B cell (primary cell): ENCODE measurements at regions of chr16 and their contacts with region 1.

Region 1: GRCh38 chr16:23877107-23878090 is 41.6 kb downstream of the PRKCB start:
- DNase-seq: peak; percentile 39
- ATAC-seq: peak; percentile 52
- H3K4me3 ChIP-seq: no peak overlapping the region
- H3K4me3 Mint-ChIP-seq: peak overlapping the region; percentile 2
- H3K27ac ChIP-seq: peak overlapping the region; percentile 34 to 77
- H3K27ac Mint-ChIP-seq: peak overlapping the region; percentile 93
- H3K4me1 ChIP-seq: peaks cover 82 to 94% of the 10 kb centered on the region in 2 donors
- H3K4me1 Mint-ChIP-seq: peaks cover 89% of the 10 kb centered on the region
- H3K27me3 ChIP-seq: no peaks in the 10 kb centered on the region
- H3K27me3 Mint-ChIP-seq: no peaks in the 10 kb centered on the region
- CTCF ChIP-seq: peak; percentile 34

Region 2: DNA sequence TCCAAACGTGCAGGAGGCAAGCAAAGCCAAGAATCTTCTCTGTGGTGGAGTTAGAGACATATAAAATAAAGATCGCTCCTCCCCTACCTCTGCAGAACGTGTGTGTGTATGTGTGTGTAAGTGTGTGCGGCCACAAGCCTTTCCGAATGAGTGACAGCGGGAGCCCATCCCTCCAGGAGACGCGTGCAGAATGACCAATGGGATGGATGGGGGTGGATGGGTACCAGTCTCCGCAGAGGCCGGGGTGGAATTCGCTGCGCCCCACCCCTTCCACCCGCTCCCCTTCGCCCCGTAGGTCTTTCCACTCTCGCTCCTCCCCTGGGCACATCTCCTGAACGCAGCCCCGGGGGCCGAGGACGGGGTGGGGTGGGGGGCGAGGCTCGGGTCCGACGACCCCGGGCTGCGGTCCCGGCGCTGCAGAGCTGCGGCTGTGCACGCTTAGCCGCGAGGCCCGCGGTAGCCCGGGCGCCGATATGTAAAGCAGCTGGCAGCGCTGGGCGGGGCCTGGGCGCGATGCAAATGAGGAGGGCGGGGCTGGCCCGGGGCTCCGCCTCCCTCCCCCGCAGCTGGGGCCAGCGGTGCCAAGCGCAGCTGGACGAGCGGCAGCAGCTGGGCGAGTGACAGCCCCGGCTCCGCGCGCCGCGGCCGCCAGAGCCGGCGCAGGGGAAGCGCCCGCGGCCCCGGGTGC is 41.9 kb before region 1 on chr16 and contains the start of gene PRKCB:
- CTCF ChIA-PET with region 1: interaction called, 8 read pairs
- POLR2A ChIA-PET with region 1: no interaction called
- intact Hi-C with region 1: loop called (anchors 5 kb)
- DNase-seq: peak; percentile 93
- ATAC-seq: peak; percentile 83
- H3K4me3 ChIP-seq: peak within 1 kb of the TSS; percentile 78 to 98 (median 88)
- H3K4me3 Mint-ChIP-seq: peak within 1 kb of the TSS; percentile 99
- H3K27ac ChIP-seq: peak within 1 kb of the TSS; percentile 7 to 56
- H3K27ac Mint-ChIP-seq: peak within 1 kb of the TSS; percentile 96
- H3K4me1 ChIP-seq: peaks cover 34 to 37% of the 10 kb centered on the region in 2 donors
- H3K4me1 Mint-ChIP-seq: peaks cover 48% of the 10 kb centered on the region
- H3K27me3 ChIP-seq: no peaks in the 10 kb centered on the region
- H3K27me3 Mint-ChIP-seq: no peaks in the 10 kb centered on the region
- CTCF ChIP-seq: no peak
- total RNA-seq, gene PRKCB: 373 and 397 TPM in 2 replicates

Region 3: DNA sequence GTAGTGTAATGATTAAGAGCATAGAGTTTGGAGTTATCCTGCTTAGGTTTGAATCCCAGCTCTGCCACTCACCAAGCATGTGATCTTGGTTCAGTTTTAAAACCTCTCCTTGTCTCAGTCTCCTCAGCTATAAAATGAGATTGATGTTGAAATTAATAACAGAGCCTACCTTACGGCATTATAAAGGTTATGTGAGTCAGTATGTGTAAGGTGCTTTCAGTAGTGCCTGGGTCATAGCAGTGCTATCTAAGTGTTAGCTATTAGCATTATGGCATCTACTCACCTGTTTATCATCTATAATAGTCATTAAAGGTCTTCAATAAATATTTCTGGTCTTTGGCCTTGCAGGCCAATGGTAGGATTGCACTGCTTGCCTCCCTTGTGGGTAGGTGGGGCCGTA is 11.8 kb after region 1 on chr16:
- CTCF ChIA-PET with region 1: interaction called, 15 read pairs
- POLR2A ChIA-PET with region 1: no interaction called
- intact Hi-C with region 1: no loop called
- DNase-seq: no peak
- ATAC-seq: no peak
- H3K4me3 ChIP-seq: no peak overlapping the region
- H3K4me3 Mint-ChIP-seq: no peak overlapping the region
- H3K27ac ChIP-seq: no peak overlapping the region
- H3K27ac Mint-ChIP-seq: peak overlapping the region; percentile 11
- H3K4me1 ChIP-seq: peaks cover 54 to 63% of the 10 kb centered on the region in 2 donors
- H3K4me1 Mint-ChIP-seq: peaks cover 85% of the 10 kb centered on the region
- H3K27me3 ChIP-seq: no peaks in the 10 kb centered on the region
- H3K27me3 Mint-ChIP-seq: no peaks in the 10 kb centered on the region
- CTCF ChIP-seq: no peak

Region 4: GRCh38 chr16:23952128-23952970 is 75.0 kb after region 1 on chr16:
- CTCF ChIA-PET with region 1: interaction called, 11 read pairs
- POLR2A ChIA-PET with region 1: interaction called, 3 read pairs
- intact Hi-C with region 1: loop called (anchors 5 kb)
- DNase-seq: peak; percentile 38
- ATAC-seq: peak; percentile 29
- H3K4me3 ChIP-seq: peak overlapping the region in 1 of 5 experiments; percentile 15
- H3K4me3 Mint-ChIP-seq: peak overlapping the region; percentile 75
- H3K27ac ChIP-seq: peak overlapping the region; percentile 28 to 88
- H3K27ac Mint-ChIP-seq: peak overlapping the region; percentile 92
- H3K4me1 ChIP-seq: peaks cover 95 to 96% of the 10 kb centered on the region in 2 donors
- H3K4me1 Mint-ChIP-seq: peaks cover 93% of the 10 kb centered on the region
- H3K27me3 ChIP-seq: no peaks in the 10 kb centered on the region
- H3K27me3 Mint-ChIP-seq: no peaks in the 10 kb centered on the region
- CTCF ChIP-seq: no peak

Region 5: GRCh38 chr16:23987443-23987842 is 110.0 kb after region 1 on chr16:
- CTCF ChIA-PET with region 1: no interaction called
- POLR2A ChIA-PET with region 1: interaction called, 11 read pairs
- intact Hi-C with region 1: no loop called
- DNase-seq: peak; percentile 71
- ATAC-seq: peak; percentile 97
- H3K4me3 ChIP-seq: no peak overlapping the region
- H3K4me3 Mint-ChIP-seq: peak overlapping the region; percentile 56
- H3K27ac ChIP-seq: peak overlapping the region; percentile 3 to 65
- H3K27ac Mint-ChIP-seq: peak overlapping the region; percentile 64
- H3K4me1 ChIP-seq: peaks cover 18 to 20% of the 10 kb centered on the region in 2 donors
- H3K4me1 Mint-ChIP-seq: peaks cover 60% of the 10 kb centered on the region
- H3K27me3 ChIP-seq: no peaks in the 10 kb centered on the region
- H3K27me3 Mint-ChIP-seq: no peaks in the 10 kb centered on the region
- CTCF ChIP-seq: no peak